ENCODE measurements at regions of chr11 and their contacts with region 1.

Region 1: DNA sequence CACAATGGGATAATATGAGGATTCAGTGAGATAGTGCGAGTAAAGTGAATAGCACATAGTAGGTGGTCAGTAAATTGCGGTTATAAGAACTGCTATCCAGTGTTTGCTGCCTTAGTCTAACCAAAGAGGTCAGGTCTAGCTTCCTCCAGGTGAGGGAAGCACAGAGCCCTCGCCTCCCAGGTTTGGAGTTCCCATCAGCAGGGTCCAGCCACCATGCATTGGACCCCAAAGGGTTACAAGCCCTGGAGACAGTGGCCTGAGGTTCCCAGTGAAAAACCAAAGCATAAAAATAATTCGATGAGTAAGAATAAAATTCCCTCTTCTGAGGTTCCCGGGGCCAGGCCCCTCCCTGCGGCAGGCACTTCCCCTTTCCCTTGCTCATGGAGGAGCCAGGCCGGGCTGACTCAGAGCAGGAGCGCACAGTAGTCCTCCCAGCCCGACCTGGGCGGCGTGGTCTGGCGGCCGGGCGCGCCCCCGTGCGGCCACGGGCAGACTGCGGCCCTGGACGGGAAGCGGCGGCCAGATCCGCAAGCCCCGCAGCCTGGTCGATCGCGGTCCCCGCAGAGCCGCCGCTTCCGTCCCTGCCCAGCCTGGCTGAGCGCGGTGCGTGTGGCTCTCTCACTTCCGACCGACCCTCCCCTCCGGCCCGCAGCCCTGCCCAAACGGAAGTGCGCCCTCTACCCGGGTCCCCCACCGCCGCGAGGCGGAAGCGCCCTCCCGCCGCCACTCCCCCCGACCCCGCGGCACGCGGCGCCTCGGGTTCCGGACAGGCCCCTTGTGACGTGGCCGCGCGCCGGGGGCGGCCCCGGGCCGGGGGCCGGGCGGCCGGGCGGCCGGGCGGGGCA is at the start of gene SLC39A13:
- DNase-seq: peak; percentile 93

Region 2: DNA sequence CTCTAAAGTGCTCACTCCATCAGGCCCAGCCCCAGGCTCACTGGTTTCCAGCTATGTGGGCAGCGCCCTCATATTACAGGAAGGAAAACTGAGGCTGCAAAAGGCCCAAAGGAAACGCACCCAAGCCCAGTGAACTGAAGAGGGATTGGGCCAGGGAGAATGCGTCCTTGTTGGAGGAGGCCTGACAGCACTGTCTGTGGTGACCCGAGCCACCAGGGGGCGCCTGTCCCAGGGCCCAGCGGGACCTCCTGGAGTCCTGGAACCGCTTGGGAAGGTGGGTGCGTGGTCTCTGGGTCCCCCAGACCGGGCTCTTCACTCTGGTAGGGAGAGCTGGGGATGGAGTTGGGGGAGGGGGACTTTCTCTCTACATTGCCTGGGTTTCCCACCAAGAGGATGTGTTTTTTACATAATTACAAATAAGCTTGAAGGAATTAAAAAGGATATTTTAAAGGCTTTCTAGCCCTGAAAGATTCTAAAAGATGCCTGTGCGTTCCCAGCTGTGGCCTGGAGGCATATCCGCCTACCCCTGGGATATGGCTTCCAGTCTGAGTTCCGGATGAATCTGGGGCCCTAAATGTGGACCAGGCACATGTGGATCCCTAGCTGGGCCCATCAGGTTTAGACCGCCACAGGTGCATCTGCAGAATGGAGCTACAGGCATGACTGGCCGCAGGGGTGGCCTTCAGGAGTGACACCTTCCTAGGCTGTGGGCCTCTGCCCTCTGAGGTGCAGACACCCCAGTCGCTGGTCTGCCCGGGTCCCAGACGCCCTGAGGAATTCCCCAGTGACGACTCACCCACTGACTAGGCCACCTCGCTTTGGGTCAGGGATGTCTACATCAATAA is 33.9 kb before region 1 on chr11:
- CTCF ChIA-PET with region 1: interaction called, 13 read pairs
- POLR2A ChIA-PET with region 1: interaction called, 15 read pairs
- DNase-seq: peak; percentile 92

Region 3: GRCh38 chr11:47426061-47426956 is 18.3 kb after region 1 on chr11 and contains the start of gene PSMC3:
- CTCF ChIA-PET with region 1: interaction called, 8 read pairs
- POLR2A ChIA-PET with region 1: interaction called, 72 read pairs
- DNase-seq: peak; percentile 93